ENCODE measurements at regions of chr1 and their contacts with region 1.

Region 1: DNA sequence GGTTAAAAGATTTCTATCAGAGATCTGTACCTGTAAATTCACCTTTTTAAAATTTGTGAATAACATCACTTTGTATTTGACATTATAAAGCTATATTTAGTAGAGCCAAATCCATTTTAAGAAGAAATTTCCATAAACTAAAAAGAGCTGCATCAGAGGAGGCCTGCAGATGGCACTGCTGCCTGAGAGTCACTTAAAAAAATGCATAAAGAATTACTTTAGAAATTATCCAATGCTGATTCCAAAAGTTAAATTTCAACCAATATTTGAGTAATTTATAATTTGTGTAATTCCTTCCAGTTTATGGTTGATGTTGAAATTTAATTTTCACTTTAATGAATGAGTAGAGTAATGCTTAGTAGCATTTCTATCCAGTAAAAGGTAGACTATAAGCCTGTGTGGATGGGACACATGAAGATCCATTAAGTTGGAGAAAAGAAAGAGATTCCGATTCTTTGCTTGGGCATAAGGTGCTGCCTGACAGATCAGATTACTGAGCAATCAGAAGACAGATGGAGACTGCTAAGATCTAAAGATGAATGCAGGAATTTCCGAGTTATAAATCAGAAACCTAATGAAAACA is 20.7 kb upstream of the RPE65 start:
- DNase-seq: no peak
- ATAC-seq: no peak
- H3K4me3 ChIP-seq: no peak overlapping the region
- H3K27ac ChIP-seq: no peak overlapping the region
- H3K4me1 ChIP-seq: no peaks in the 10 kb centered on the region
- H3K27me3 ChIP-seq: no peaks in the 10 kb centered on the region
- CTCF ChIP-seq: peak; percentile 25 to 74 (median 52)
- POLR2A ChIP-seq: no peak

Region 2: GRCh38 chr1:68339471-68339870 is 131.0 kb before region 1 on chr1:
- intact Hi-C with region 1: no loop called
- DNase-seq: no peak
- ATAC-seq: peak in 1 of 4 donors; percentile 49
- H3K4me3 ChIP-seq: no peak overlapping the region
- H3K27ac ChIP-seq: no peak overlapping the region
- H3K4me1 ChIP-seq: peaks cover 0 to 27% (median 0%) of the 10 kb centered on the region in 12 donors
- H3K27me3 ChIP-seq: no peaks in the 10 kb centered on the region
- CTCF ChIP-seq: no peak
- POLR2A ChIP-seq: no peak

Region 3: DNA sequence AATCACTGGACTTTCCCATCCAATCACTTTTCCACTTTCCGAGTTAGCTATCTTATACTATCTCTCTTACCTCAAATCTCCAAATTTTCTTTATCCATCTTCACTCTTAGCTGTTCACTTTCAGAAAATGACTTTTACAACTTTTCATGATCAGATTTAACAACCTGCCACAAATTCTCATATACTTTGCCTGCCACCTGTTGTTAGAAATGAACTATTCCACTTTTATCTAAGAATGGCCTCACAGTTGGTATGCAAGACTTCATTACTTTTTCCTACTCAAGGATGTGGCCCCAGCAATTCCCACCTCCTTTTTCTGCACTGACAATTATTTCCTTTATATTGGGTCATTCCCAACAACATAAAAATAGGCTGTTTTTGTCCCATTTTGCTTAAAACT is 120.0 kb after region 1 on chr1:
- intact Hi-C with region 1: loop called in 2 of 10 experiments (anchors 10 kb)
- DNase-seq: no peak
- ATAC-seq: no peak
- H3K4me3 ChIP-seq: no peak overlapping the region
- H3K27ac ChIP-seq: no peak overlapping the region
- H3K4me1 ChIP-seq: no peaks in the 10 kb centered on the region
- H3K27me3 ChIP-seq: no peaks in the 10 kb centered on the region
- CTCF ChIP-seq: peak in 2 of 12 donors; percentile 13 to 16
- POLR2A ChIP-seq: no peak

Region 4: GRCh38 chr1:69728206-69728605 is 1257.7 kb after region 1 on chr1:
- intact Hi-C with region 1: loop called in 2 of 10 experiments (anchors 10 kb)
- DNase-seq: no peak
- ATAC-seq: no peak
- H3K4me3 ChIP-seq: no peak overlapping the region
- H3K27ac ChIP-seq: no peak overlapping the region
- H3K4me1 ChIP-seq: no peaks in the 10 kb centered on the region
- H3K27me3 ChIP-seq: no peaks in the 10 kb centered on the region
- CTCF ChIP-seq: no peak
- POLR2A ChIP-seq: no peak

Measured in heart left ventricle (tissue), 16 donors.